ENCODE measurements at regions of chrX and their contacts with region 1.

Region 1: DNA sequence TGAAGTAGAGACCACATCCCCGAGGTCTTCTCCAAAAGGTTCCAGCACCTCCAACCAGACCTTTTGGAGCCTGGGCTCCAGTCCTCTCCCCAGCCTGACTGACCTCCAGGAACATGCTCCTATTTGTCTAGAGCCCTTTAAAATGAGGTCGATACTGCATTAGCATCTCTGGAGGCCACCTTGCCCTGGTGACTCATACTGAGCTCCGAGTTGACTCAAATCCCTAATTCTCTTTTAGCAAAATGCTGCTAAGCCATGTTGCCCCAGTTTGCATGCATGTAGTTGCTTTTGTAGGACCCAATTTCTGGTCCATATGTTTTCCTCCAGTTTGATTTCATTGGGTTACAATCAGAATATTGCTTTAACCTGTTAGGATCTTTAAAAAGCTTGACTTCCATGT is 43.5 kb upstream of the CITED1 start:
- DNase-seq: no peak
- ATAC-seq: no peak
- H3K4me3 ChIP-seq: no peak overlapping the region
- H3K27ac ChIP-seq: no peak overlapping the region
- H3K4me1 ChIP-seq: no peaks in the 10 kb centered on the region
- H3K27me3 ChIP-seq: no peaks in the 10 kb centered on the region
- CTCF ChIP-seq: no peak
- POLR2A ChIP-seq: no peak

Region 2: GRCh38 chrX:72430405-72430968 is 81.3 kb after region 1 on chrX:
- in situ Hi-C with region 1: loop called in 1 of 4 experiments (anchors 25 kb)
- intact Hi-C with region 1: no loop called
- DNase-seq: no peak
- ATAC-seq: no peak
- H3K4me3 ChIP-seq: no peak overlapping the region
- H3K27ac ChIP-seq: no peak overlapping the region
- H3K4me1 ChIP-seq: no peaks in the 10 kb centered on the region
- H3K27me3 ChIP-seq: peaks cover 0 to 3% (median 0%) of the 10 kb centered on the region in 3 donors
- CTCF ChIP-seq: no peak
- POLR2A ChIP-seq: no peak

Region 3: DNA sequence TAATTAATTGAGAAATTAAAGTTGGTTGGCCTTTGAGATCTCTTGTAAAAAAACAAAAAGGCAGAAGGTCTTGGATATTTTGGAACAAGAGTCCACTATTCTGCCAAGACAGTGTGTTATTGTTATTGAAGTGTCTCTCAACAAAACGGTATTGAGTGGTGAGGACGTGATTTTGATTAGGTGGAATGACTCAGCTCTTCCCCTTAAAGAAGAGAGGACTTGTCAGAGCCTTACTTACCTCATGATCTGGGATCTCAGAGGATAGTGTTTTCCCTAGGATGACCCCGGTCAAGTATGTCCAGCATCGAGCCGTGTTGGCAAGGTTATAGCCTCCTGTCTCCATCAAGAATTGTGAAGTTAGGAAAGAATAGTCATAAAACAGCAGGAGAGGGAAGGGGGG is 112.6 kb after region 1 on chrX:
- in situ Hi-C with region 1: no loop called
- intact Hi-C with region 1: no loop called
- DNase-seq: no peak
- ATAC-seq: no peak
- H3K4me3 ChIP-seq: no peak overlapping the region
- H3K27ac ChIP-seq: no peak overlapping the region
- H3K4me1 ChIP-seq: peaks cover 0 to 2% of the 10 kb centered on the region in 2 donors
- H3K27me3 ChIP-seq: no peaks in the 10 kb centered on the region
- CTCF ChIP-seq: no peak
- POLR2A ChIP-seq: no peak